ENCODE measurements at regions of chr2 and their contacts with region 1.

Region 1: GRCh38 chr2:95402370-95403203 is at the start of gene FAHD2A:
- DNase-seq: peak; percentile 96 to 97
- H3K4me3 ChIP-seq: peak within 1 kb of the TSS; percentile 85 to 87
- H3K27ac ChIP-seq: peak within 1 kb of the TSS; percentile 80 to 85
- H3K4me1 ChIP-seq: peaks cover 0 to 21% (median 13%) of the 10 kb centered on the region in 4 donors
- H3K27me3 ChIP-seq: no peaks in the 10 kb centered on the region
- CTCF ChIP-seq: no peak

Region 2: DNA sequence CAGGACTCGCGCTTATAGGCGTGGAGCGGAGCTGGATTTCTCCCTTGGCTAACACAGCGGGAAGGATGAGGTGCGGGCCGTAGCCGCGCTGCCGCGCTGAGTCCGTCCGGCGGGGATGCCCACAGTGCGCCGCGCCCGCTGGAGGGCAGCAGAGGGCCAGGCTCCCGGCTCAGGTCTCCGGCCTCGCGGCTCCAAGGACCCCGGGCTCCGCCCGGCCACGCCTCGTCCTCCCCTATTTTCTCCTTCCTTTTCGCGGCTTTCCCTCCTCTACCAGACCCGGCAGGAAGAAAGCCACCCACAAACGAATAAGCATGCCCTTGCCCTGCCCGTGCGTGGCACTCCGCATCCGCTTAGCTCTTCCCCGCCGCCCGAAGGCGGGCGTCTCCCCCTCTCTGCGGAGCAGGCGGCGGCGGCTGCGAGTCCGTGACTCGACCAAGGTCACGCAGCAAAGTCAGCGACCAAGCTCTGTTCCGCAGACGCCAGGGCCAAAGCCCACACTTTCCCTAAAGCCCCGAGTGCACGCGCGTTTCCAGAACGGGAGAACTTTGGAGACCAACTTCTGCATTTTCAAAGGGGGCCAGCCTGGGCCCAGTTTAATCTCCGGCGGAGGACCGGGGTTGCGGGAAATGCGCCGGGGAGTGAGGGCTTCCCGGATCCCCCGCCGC is 56.9 kb before region 1 on chr2:
- intact Hi-C with region 1: loop called (anchors 5 kb)
- DNase-seq: peak; percentile 82 to 93
- H3K4me3 ChIP-seq: peak overlapping the region; percentile 67 to 76
- H3K27ac ChIP-seq: peak overlapping the region; percentile 72 to 76
- H3K4me1 ChIP-seq: peaks cover 0 to 18% (median 14%) of the 10 kb centered on the region in 4 donors
- H3K27me3 ChIP-seq: peaks cover 0 to 6% of the 10 kb centered on the region in 2 donors
- CTCF ChIP-seq: peak; percentile 86 to 97